SK-N-SH (cell line): ENCODE measurements at regions of chr13 and their contacts with region 1.

Region 1: GRCh38 chr13:52850396-52851136 is 2.1 kb upstream of the PCDH8 start:
- DNase-seq: peak; percentile 71
- H3K4me3 ChIP-seq: peak overlapping the region; percentile 69 to 97
- H3K27ac ChIP-seq: peak overlapping the region in 1 of 2 experiments; percentile 79; a peak in 2 of 4 replicates
- H3K4me1 ChIP-seq: peaks cover 6 to 34% of the 10 kb centered on the region in 2 experiments; a peak in 3 of 4 replicates
- H3K27me3 ChIP-seq: peaks cover 37% of the 10 kb centered on the region
- CTCF ChIP-seq: peak; percentile 26; the same call in 1 of the 2 replicates
- EP300 ChIP-seq: no peak
- RAD21 ChIP-seq: no peak

Region 2: GRCh38 chr13:52652196-52652979 is 198.2 kb before region 1 on chr13 and contains the start of gene SUGT1:
- CTCF ChIA-PET with region 1: interaction called, 24 read pairs
- POLR2A ChIA-PET with region 1: interaction called, 10 read pairs
- DNase-seq: peak; percentile 91
- H3K4me3 ChIP-seq: peak within 1 kb of the TSS; percentile 81 to 96
- H3K27ac ChIP-seq: peak within 1 kb of the TSS; percentile 100
- H3K4me1 ChIP-seq: peaks cover 0 to 6% of the 10 kb centered on the region in 2 experiments; a peak in 2 of 4 replicates
- H3K27me3 ChIP-seq: no peaks in the 10 kb centered on the region
- CTCF ChIP-seq: peak; percentile 68
- EP300 ChIP-seq: 0 out of 4 replicates have a peak, but pooled peaks of 1 of the 2 experiments have one; percentile 43
- RAD21 ChIP-seq: no peak
- polyA plus RNA-seq, gene SUGT1: 17.8 and 18.6 TPM in 2 replicates

Region 3: DNA sequence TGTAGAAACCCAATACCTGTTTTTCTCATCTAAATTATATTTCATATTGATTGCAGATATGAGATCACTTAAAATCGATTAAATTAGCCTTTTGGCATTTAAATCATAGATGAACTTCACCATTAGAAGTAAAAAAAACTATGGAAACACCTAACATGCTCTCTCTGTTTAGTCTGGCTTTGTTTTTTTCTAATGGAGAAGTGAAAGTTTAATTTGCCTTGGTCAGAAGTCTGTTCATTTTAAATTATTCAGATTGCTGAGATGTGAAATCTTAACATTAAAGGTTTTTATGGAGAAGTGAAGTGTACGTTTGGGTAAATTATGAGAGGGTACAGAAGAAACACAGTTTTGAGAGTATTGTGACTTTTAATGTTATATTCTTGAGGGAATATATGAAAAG is 191.2 kb before region 1 on chr13:
- CTCF ChIA-PET with region 1: interaction called, 86 read pairs
- POLR2A ChIA-PET with region 1: no interaction called
- DNase-seq: no peak
- H3K4me3 ChIP-seq: no peak overlapping the region
- H3K27ac ChIP-seq: no peak overlapping the region
- H3K4me1 ChIP-seq: no peaks in the 10 kb centered on the region; a peak in 1 of 4 replicates
- H3K27me3 ChIP-seq: no peaks in the 10 kb centered on the region
- CTCF ChIP-seq: no peak
- EP300 ChIP-seq: no peak
- RAD21 ChIP-seq: no peak

Region 4: DNA sequence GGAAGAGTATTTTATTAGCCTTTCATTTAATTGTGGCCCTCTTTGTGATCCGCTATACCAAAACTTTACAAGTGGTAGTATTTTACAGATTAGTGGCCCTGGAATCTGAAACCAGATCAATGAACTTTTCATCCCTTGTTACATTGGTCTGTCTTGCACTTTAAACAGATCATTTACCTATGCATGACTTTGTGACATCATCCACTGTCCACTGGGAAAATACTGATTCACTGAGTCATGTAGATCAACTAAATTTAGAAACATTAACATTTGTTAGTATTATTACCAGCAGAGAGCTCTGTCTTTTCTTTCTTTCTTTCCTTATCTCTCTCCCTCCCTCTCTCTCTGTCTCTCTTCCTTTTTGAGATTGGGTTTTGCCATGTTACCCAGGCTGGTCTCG is 19.6 kb before region 1 on chr13:
- CTCF ChIA-PET with region 1: interaction called, 124 read pairs
- POLR2A ChIA-PET with region 1: interaction called, 3 read pairs
- DNase-seq: no peak
- H3K4me3 ChIP-seq: no peak overlapping the region
- H3K27ac ChIP-seq: no peak overlapping the region
- H3K4me1 ChIP-seq: peaks cover 6 to 20% of the 10 kb centered on the region in 2 experiments; a peak in 2 of 4 replicates
- H3K27me3 ChIP-seq: no peaks in the 10 kb centered on the region
- CTCF ChIP-seq: no peak
- EP300 ChIP-seq: no peak
- RAD21 ChIP-seq: no peak

Region 5: DNA sequence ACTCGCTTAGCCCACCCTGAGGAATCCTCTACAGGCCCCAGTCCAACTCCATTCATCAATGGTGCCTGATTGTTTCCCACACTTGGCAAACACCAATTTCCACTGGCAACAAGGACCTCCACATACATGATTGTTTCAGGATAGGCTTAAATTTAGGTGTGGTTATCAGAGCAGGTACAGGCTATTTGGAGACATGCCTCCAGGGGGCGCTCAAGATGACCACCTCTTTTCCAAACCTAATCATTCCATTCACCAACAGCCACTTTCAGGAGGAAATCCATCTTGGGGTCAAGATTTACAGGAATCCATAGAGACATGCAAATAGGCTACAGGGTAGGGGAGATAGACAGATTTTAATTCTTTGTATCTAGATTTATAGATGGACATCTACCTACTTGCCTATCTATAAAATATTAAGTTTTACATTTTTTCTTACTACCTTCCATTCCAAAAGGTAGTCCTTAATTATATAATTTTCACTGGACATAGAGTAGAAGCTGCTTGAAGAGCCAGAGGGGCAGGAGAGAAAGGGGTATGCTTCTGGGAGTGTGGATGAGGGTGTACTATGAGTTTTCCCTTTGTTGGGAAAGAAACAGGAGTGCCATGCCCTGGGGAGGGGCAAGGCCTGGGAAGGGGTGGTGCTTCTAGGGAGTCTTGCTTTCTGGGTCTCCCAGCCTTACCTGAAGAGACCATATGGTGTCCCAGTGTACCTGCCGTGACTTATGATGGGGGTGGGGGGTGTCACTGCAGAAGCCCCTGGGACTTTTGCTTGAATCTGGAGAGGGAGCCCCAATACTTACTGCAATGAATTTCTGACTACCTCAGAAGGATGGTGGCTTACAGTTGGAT is 12.0 kb after region 1 on chr13:
- CTCF ChIA-PET with region 1: interaction called, 85 read pairs
- POLR2A ChIA-PET with region 1: no interaction called
- DNase-seq: peak; percentile 59
- H3K4me3 ChIP-seq: no peak overlapping the region; a peak in 1 of 4 replicates
- H3K27ac ChIP-seq: no peak overlapping the region
- H3K4me1 ChIP-seq: no peaks in the 10 kb centered on the region
- H3K27me3 ChIP-seq: no peaks in the 10 kb centered on the region; the same call in 1 of the 2 replicates
- CTCF ChIP-seq: peak; percentile 79
- EP300 ChIP-seq: no peak
- RAD21 ChIP-seq: peak; percentile 48

Region 6: DNA sequence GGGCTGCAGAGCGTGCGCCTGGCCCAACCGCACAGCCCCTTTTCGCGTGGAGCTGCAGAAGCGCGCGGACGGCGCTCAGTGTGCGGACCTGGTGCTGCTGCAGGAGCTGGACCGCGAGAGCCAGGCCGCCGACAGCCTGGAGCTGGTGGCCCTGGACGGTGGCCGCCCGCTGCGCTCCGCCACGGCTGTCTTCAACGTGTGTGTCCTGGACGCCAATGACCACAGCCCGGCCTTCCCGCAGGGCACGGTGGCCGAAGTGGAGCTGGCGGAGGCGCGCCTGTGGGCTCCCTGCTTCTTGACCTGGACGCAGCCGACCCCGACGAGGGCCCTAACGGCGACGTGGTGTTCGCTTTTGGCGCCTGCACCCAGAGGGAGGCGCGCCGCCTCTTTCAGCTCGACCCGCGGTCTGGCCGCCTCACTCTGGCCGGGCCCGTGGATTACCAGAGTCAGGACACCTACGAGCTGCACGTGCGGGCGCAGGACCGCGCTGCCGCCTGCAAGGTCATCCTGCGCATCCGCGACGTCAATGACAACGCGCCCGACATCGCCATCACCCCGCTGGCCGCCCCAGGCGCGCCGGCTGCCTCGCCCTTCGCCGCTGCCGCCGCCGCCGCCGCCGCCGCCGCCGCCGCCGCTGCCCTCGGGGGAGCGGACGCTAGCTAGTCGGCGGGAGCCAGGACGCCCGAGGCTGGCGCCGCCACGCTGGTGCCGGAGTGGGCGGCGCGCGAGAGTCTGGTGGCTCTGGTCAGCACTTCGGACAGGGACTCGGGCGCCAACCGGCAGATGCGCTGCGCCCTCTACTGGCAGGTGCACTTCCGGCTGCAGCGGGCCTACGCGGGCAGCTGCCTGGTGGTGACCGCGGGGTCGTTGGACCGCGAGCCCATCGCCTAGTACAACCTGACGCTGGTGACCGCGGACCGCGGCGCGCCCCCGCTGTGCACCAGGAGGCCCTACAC is 350.2 kb after region 1 on chr13:
- CTCF ChIA-PET with region 1: interaction called, 29 read pairs
- POLR2A ChIA-PET with region 1: no interaction called
- DNase-seq: peak; percentile 44
- H3K4me3 ChIP-seq: no peak overlapping the region; a peak in 1 of 4 replicates
- H3K27ac ChIP-seq: no peak overlapping the region
- H3K4me1 ChIP-seq: no peaks in the 10 kb centered on the region; a peak in 2 of 4 replicates
- H3K27me3 ChIP-seq: no peaks in the 10 kb centered on the region
- CTCF ChIP-seq: no peak; the same call in 1 of the 2 replicates
- EP300 ChIP-seq: no peak
- RAD21 ChIP-seq: no peak